GM12878 (cell line): ENCODE measurements at regions of chr20 and their contacts with region 1.

Region 1: DNA sequence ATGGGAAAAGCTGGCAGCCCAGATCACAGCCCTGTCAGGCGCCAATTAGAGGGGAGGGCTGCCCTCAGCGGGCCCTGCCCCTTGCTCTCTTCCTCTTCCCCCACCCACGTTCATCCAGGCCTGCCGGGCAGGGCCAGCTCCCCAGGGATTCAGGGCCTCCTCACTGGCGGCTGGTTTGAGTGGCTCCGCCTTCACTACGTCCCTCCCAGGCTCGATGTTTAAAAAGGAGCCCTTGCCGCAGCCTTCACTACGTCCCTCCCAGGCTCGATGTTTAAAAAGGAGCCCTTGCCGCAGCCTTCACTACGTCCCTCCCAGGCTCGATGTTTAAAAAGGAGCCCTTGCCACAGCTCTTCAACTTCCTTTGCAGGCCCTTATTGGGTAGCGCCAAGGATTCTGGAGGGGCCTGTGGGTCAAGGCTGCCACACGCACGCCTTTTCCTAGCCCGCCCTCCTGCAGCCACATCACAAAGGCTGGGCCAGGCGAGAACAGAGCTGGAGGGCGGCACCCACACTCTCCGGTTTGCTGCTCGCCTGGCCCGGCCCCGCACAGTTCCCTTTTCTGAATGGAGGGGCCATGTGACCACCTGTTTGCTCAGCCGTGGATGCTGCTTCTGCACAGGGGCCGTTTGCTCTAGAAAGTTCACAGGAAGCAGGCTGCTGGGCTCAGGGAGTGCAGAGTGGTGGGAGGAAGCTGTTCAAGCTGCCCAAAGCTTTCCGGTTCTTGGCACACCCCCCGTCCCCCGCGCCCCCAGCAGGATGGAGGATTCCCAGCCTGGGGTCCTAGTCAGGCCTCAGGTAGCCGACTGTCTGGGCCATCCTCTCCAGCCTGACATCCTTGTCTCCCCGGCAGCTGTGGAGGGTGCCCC is 1.6 kb downstream of the SLC17A9 start:
- DNase-seq: peak; percentile 75
- ATAC-seq: peak; percentile 86
- H3K4me3 ChIP-seq: peak overlapping the region; percentile 98
- H3K27ac ChIP-seq: peak overlapping the region; percentile 94
- H3K4me1 ChIP-seq: peaks cover 12% of the 10 kb centered on the region
- H3K27me3 ChIP-seq: no peaks in the 10 kb centered on the region
- CTCF ChIP-seq: no peak
- EP300 ChIP-seq: peak; percentile 11 to 50; a peak in 1 of 4 replicates
- POLR2A ChIP-seq: peak; percentile 57
- RAD21 ChIP-seq: no peak

Region 2: DNA sequence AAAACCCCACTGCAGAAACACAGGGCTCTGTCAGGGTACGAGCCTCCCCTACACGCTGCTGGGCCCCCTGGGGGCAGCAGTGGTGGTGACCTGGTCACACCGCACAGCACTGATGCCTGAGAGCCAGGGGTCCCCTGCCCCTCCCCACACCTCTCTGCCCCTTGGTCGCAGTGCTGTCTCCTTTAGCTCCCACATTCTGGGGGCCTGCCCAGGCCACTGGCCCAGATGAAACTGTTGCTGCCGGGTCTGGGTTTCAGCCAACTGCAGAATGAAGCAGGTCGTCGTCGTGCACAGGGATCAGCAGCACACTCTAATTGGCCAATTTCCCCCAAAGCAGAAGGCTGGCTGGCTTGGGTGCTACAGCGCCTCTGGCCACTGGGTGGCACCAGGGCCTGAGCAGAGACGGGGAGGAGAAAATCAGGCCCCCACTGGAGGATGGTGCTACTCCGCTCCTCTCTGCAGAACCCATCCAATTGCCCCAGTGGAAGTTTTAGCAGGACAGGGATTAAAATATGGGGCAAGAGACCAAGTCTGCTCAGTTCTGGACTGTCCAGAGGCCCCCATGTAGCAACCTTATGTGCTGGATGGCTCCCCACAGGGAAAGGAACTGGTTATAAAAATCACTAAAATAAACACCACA is 53.9 kb before region 1 on chr20:
- CTCF ChIA-PET with region 1: interaction called, 27 read pairs
- POLR2A ChIA-PET with region 1: interaction called, 7 read pairs
- RAD21 ChIA-PET with region 1: interaction called, 7 read pairs
- SMC1A ChIA-PET with region 1: interaction called, 8 read pairs
- in situ Hi-C with region 1: no loop called
- intact Hi-C with region 1: loop called (anchors 5 kb)
- DNase-seq: no peak
- ATAC-seq: peak; percentile 97
- H3K4me3 ChIP-seq: no peak overlapping the region
- H3K27ac ChIP-seq: peak overlapping the region; percentile 30
- H3K4me1 ChIP-seq: peaks cover 25% of the 10 kb centered on the region
- H3K27me3 ChIP-seq: no peaks in the 10 kb centered on the region
- CTCF ChIP-seq: peak; percentile 94 to 98 (median 96)
- EP300 ChIP-seq: no peak
- POLR2A ChIP-seq: peak; percentile 74
- RAD21 ChIP-seq: peak; percentile 74

Region 3: GRCh38 chr20:62921119-62921687 is 32.9 kb before region 1 on chr20:
- CTCF ChIA-PET with region 1: interaction called, 11 read pairs
- POLR2A ChIA-PET with region 1: interaction called, 15 read pairs
- RAD21 ChIA-PET with region 1: interaction called, 8 read pairs
- SMC1A ChIA-PET with region 1: interaction called, 19 read pairs
- in situ Hi-C with region 1: no loop called
- intact Hi-C with region 1: no loop called
- DNase-seq: no peak
- ATAC-seq: peak; percentile 65
- H3K4me3 ChIP-seq: peak overlapping the region; percentile 18; the same call in 1 of the 2 replicates
- H3K27ac ChIP-seq: no peak overlapping the region
- H3K4me1 ChIP-seq: peaks cover 52% of the 10 kb centered on the region
- H3K27me3 ChIP-seq: no peaks in the 10 kb centered on the region
- CTCF ChIP-seq: peak; percentile 53 to 77 (median 54); a peak in 5 of 6 replicates
- EP300 ChIP-seq: no peak
- POLR2A ChIP-seq: no peak
- RAD21 ChIP-seq: 0 out of 2 replicates have a peak, but pooled peaks have one; percentile 26

Region 4: DNA sequence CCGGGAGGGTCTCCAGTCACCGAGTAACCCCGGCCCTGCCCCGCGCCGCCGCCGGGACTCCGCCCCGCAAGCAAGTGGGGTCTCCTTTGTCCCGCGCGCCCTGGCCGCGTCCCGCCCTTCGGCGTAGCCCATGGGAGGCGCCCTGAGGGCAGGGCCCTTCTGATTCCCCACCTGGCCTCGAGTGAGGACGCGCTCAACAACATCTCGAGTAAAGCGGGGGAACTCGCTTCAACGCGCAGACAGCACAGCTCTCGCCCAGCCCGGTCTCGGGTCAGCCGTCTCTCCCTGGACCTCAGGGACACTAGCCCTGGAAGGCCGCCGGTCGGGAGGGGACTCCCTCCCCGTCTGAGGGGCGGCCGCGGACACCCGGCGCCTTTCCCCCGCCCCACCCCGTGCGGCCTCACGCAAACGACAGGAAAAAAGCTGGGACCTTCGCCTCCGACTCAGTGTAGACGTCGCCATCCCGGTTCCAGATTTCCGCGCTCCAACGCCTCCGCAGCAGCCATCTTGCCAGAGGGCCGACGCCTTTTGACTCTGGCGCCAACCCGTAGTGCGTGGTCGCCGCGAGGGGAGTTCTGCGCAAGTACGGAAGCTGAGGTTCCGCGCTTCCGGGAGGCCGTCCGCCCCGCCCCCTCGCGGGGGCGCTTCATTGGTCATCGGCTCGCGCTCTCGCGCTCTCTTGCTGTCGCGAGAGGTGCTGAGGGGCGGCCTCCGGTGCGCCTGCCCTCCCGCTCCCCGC is 16.5 kb before region 1 on chr20:
- CTCF ChIA-PET with region 1: interaction called, 13 read pairs
- POLR2A ChIA-PET with region 1: interaction called, 27 read pairs
- RAD21 ChIA-PET with region 1: interaction called, 17 read pairs
- SMC1A ChIA-PET with region 1: interaction called, 20 read pairs
- in situ Hi-C with region 1: no loop called
- intact Hi-C with region 1: loop called (anchors 2 kb)
- DNase-seq: peak; percentile 82
- ATAC-seq: peak; percentile 91
- H3K4me3 ChIP-seq: peak overlapping the region; percentile 71
- H3K27ac ChIP-seq: peak overlapping the region; percentile 90
- H3K4me1 ChIP-seq: 0 out of 2 replicates have a peak, but pooled peaks cover 5% of the 10 kb centered on the region
- H3K27me3 ChIP-seq: no peaks in the 10 kb centered on the region
- CTCF ChIP-seq: no peak
- EP300 ChIP-seq: 0 out of 4 replicates have a peak, but pooled peaks of 1 of the 2 experiments have one; percentile 13
- POLR2A ChIP-seq: peak; percentile 90
- RAD21 ChIP-seq: no peak

Region 5: GRCh38 chr20:62977613-62978560 is 23.8 kb after region 1 on chr20:
- CTCF ChIA-PET with region 1: interaction called, 9 read pairs
- POLR2A ChIA-PET with region 1: interaction called, 8 read pairs
- RAD21 ChIA-PET with region 1: interaction called, 19 read pairs
- SMC1A ChIA-PET with region 1: interaction called, 12 read pairs
- in situ Hi-C with region 1: no loop called
- intact Hi-C with region 1: no loop called
- DNase-seq: peak; percentile 71
- ATAC-seq: peak; percentile 81
- H3K4me3 ChIP-seq: peak overlapping the region; percentile 49; the same call in 1 of the 2 replicates
- H3K27ac ChIP-seq: peak overlapping the region; percentile 41
- H3K4me1 ChIP-seq: peaks cover 30% of the 10 kb centered on the region
- H3K27me3 ChIP-seq: peaks cover 0 to 16% of the 10 kb centered on the region in 2 experiments; a peak in 2 of 4 replicates
- CTCF ChIP-seq: no peak
- EP300 ChIP-seq: peak; percentile 94 to 98; a peak in 3 of 4 replicates
- POLR2A ChIP-seq: peak; percentile 71
- RAD21 ChIP-seq: no peak